Dorsolateral prefrontal cortex (tissue), 120 donors: ENCODE measurements at regions of chr7 and their contacts with region 1.

Region 1: DNA sequence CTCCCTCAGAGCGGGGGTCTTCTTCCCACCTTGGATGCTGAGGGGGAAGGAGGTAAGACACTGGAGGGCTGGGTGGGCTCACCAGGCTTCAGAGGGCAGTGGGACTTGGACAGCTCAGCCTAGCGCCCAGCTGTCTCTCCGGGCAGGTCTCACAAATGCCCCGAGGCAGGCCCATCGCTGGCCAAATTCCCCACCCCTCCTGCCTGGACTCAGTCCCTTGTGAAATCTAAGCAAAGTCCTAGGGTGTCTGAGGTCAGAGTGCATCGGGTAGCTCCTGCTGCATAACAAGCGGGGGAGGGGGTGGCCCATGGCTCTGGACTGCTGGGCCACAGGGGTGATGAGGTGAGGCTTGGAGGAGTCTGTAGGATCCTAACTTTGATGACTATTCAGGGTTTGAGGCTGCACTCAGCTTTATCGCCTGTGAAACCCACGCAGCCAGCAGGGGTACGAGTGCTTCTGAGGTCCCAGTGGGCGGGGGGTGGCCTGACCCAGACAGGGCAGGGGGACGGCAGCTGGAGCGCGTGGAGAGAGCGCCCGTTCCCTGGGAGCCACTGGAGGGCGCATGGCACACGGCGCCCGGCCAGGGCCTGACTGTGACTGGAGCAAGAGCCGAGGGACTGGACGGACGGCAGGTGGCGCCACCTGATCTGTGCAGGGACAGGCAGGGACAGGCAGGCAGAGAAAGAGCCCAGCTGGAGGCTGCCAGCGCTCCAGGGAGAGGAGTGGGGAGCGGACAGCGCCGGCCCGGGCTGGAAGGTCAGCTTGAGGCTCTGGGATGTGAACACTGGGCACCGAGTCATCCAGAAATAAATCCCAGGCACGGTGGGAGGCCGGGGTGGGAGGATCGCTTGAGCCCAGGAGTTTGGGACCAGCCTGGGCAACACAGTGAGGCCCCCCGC is 10.0 kb downstream of the CYP2W1 start:
- DNase-seq: peak; percentile 94 to 99 (median 97)
- H3K4me3 ChIP-seq: peak overlapping the region in 14 of 59 donors; percentile 4 to 34 (median 23)
- H3K27ac ChIP-seq: peak overlapping the region in 17 of 59 donors; percentile 4 to 67 (median 37)
- H3K27me3 ChIP-seq: peaks cover 0 to 11% (median 0%) of the 10 kb centered on the region in 45 donors
- CTCF ChIP-seq: peak; percentile 87 to 100 (median 100)

Region 2: DNA sequence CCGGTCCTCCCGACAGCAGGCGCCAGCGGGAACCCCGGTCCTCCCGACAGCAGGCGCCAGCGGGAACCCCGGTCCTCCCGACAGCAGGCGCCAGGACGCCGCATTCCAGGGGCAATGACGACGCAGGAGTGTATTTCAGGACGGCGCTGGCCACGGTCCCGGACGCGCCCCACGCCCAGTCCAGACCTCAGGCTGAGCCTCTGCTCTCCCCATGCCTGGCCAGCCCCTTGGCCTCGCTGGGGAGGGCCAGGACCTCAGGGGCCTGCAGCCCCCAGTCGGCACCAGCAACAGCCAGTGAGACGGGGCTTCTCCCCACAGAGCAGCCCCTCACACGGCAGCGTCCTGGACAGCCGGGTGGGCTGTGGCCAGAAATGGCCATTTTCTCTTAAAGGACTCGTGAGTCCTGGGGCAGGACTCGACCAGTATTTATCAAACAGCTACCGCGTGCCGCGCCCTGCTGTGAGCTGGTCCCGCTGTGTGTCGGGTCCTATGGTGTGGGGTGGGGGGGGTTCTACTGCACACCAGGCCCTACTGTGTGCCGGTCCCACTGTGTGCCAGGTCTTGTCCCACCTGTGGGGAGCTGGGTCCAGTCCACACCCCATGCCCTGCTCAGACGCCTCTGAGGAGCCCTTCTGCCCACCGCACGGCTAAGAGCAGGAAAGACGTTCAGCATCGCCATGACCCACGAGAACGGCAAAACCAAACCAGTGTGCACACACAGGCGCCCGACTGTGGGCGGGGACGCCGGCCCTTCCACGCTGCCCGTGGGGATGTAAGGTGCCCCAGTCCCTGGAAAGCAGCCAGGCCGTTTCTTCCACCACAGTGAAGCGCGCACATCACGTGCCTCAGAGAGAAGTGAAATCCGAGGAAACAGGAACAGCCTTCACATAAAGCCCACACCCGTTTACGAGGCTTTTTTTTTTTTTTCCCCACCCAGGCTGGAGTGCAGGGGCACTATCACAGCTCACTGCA is 83.3 kb before region 1 on chr7:
- intact Hi-C with region 1: loop called in 1 of 2 experiments (anchors 2 kb)
- DNase-seq: peak in 5 of 10 donors; percentile 57 to 68 (median 64)
- H3K4me3 ChIP-seq: peak overlapping the region in 33 of 59 donors; percentile 9 to 55 (median 38)
- H3K27ac ChIP-seq: peak overlapping the region; percentile 49 to 100 (median 97)
- H3K27me3 ChIP-seq: no peaks in the 10 kb centered on the region
- CTCF ChIP-seq: peak in 2 of 56 donors; percentile 3 to 5

Region 3: DNA sequence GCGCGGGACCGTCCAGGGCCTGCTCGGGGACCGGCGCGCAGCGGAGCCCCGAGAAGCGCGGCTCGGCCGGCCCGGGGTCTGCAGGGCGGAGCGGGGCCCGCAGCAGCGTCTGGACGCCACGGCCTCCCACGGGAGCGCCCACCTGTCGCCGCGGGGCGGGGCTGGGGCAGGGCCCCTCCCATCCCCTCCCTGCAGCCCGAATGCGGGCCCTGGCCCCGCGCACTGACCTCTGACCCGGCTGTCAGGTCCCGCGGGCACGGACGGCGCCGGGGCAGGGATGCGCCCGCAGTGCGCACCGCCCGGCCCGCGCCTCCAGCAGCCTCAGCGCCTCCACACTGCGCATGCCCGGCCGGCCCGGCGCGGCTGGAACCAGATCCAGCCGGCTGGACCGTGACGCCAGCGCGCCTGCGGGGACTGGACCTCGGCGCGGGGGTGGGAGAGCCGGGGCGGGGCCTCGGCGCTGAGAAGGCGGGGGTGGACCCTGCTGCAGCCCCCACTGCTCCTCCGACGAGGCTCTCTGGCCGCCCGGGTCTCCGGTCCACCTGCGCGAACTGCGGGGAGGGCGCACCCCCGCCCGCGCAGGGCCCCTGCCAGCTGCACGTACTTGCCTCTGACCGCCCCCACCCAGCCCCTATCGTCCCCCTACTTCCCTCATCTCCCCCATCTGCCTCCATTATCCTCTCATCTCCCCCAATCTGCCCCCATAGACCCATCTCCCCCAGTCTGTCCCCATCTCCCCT is 35.2 kb after region 1 on chr7:
- intact Hi-C with region 1: loop called in 1 of 2 experiments (anchors 5 kb)
- DNase-seq: peak; percentile 69 to 95 (median 86)
- H3K4me3 ChIP-seq: peak overlapping the region; percentile 64 to 97 (median 83)
- H3K27ac ChIP-seq: peak overlapping the region; percentile 74 to 99 (median 94)
- H3K27me3 ChIP-seq: no peaks in the 10 kb centered on the region
- CTCF ChIP-seq: peak in 13 of 56 donors; percentile 2 to 32 (median 19)

Region 4: GRCh38 chr7:1065263-1066260 is 72.6 kb after region 1 on chr7:
- intact Hi-C with region 1: loop called (anchors 1 to 2 kb)
- DNase-seq: peak; percentile 77 to 90 (median 85)
- H3K4me3 ChIP-seq: peak overlapping the region in 54 of 59 donors; percentile 6 to 64 (median 42)
- H3K27ac ChIP-seq: peak overlapping the region in 4 of 59 donors; percentile 52 to 73 (median 68)
- H3K27me3 ChIP-seq: no peaks in the 10 kb centered on the region
- CTCF ChIP-seq: peak; percentile 48 to 98 (median 94)

Region 5: DNA sequence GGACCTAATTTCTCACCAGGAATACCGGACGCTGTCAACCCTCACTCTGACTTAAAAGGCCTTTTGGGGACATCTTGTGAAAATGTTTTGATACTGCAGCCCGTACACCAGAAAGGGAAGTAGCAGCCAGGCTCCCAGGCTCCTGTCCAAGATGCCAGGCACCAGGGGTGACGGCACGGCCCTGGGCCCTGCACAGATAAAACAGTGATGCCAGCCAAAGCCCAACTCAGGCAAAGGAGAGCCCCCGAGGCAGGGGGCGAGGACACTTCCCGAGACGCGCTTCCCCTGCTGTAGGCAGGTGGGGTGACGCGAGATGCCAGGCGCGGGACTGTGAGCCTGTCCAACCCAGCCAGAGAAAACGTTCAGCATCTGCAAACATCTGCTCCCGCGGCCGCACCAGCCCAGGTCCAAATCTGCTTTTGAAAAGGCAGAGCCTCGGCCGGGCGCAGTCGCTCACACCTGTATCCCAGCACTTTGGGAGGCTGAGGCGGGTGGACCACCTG is 151.4 kb after region 1 on chr7:
- intact Hi-C with region 1: loop called in 1 of 2 experiments (anchors 5 kb)
- DNase-seq: peak in 5 of 10 donors; percentile 40 to 70 (median 48)
- H3K4me3 ChIP-seq: peak overlapping the region in 3 of 59 donors; percentile 1 to 18 (median 12)
- H3K27ac ChIP-seq: peak overlapping the region in 6 of 59 donors; percentile 13 to 59 (median 34)
- H3K27me3 ChIP-seq: no peaks in the 10 kb centered on the region
- CTCF ChIP-seq: peak in 47 of 56 donors; percentile 11 to 66 (median 39)

Region 6: GRCh38 chr7:1175967-1176851 is 183.3 kb after region 1 on chr7:
- intact Hi-C with region 1: loop called in 1 of 2 experiments (anchors 5 kb)
- DNase-seq: peak; percentile 61 to 90 (median 78)
- H3K4me3 ChIP-seq: peak overlapping the region in 43 of 59 donors; percentile 2 to 56 (median 30)
- H3K27ac ChIP-seq: peak overlapping the region in 6 of 59 donors; percentile 9 to 76 (median 34)
- H3K27me3 ChIP-seq: peaks cover 0 to 9% (median 0%) of the 10 kb centered on the region in 45 donors
- CTCF ChIP-seq: peak; percentile 52 to 93 (median 85)